PC-3 (cell line): ENCODE measurements at regions of chr3 and their contacts with region 1.

Region 1: DNA sequence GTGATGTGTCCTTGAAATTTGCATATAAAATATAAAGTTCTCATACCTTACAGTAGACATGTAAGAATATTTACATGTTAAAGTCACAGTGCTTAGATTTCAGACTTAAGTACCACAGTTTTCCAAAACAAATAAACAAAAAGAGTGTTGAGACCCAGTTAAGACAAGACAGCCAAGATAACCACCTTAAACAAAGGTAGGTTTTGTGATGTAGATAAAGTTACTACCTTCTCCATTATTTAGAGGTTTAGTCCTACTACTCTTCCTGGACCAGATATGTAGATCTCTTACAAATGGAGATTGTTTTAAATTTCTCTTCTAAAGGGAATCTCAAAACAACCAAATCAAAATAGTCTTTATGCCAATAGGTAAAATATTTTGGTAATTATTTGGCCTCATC is 15.7 kb downstream of the OR5H15 start:
- DNase-seq: no peak
- ATAC-seq: no peak
- H3K4me3 ChIP-seq: no peak overlapping the region
- H3K27ac ChIP-seq: no peak overlapping the region
- H3K4me1 ChIP-seq: no peaks in the 10 kb centered on the region
- H3K27me3 ChIP-seq: no peaks in the 10 kb centered on the region
- CTCF ChIP-seq: no peak

Region 2: DNA sequence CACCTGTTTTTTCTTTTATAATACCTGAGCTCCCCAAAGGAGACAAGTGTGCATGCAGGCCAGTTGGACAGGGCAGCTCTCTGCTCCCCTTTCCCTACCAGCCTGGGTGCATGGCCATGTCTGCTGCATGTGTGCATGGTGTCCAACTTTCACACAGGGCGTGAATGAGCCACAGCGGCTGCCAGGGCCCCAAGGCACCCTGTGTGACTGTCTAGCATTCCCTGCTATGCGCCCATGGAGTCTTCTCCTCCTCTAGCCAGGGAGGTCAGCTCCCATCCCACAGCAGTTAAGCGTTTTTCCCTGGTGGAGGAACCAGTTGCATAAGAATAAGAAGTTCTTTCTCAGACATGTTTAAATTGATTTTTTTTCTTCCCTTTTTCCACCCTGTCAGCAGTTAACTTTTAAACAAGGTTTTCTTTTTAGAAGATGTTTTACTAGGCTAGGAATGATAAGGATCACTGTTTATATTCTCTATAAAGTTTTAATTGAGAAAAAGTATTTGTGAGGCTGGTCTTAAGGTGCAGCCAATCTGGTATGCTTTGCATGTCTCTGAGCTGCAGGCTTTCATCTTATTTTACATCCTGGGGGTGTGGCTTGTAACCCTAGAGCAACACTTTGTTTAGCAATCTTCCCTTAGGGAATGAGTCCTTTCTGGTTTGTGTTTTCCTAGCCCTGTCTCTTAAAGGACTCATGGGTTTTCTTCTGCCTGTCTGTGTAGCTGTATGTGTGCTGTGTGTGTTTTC is 72.2 kb before region 1 on chr3:
- CTCF ChIA-PET with region 1: no interaction called
- POLR2A ChIA-PET with region 1: no interaction called
- intact Hi-C with region 1: no loop called
- DNase-seq: no peak
- ATAC-seq: no peak
- H3K4me3 ChIP-seq: no peak overlapping the region
- H3K27ac ChIP-seq: no peak overlapping the region
- H3K4me1 ChIP-seq: no peaks in the 10 kb centered on the region
- H3K27me3 ChIP-seq: no peaks in the 10 kb centered on the region
- CTCF ChIP-seq: no peak

Region 3: GRCh38 chr3:98140531-98140930 is 41.7 kb before region 1 on chr3:
- CTCF ChIA-PET with region 1: no interaction called
- POLR2A ChIA-PET with region 1: no interaction called
- intact Hi-C with region 1: loop called (anchors 2 kb)
- DNase-seq: no peak
- ATAC-seq: no peak
- H3K4me3 ChIP-seq: no peak overlapping the region
- H3K27ac ChIP-seq: no peak overlapping the region
- H3K4me1 ChIP-seq: no peaks in the 10 kb centered on the region
- H3K27me3 ChIP-seq: peaks cover 53% of the 10 kb centered on the region
- CTCF ChIP-seq: no peak

Region 4: DNA sequence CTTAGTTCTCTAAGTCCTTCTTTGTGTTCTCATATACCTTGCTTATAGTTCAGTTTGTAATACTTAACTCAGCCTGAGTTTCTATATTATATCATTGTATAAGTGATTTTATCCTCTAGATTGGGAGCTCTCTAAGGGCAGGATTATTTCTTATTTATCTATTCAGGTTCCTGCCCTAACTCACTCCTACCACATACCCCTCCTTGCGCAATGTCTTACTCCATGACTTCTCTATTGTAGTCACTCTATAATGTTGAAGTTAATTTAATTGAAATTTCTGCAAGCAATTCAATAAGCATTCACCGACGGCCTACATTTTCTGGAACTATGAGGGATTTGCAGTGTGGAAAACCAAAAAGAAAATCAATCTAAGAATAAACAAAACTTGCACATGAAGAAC is 167.9 kb after region 1 on chr3:
- CTCF ChIA-PET with region 1: no interaction called
- POLR2A ChIA-PET with region 1: no interaction called
- intact Hi-C with region 1: no loop called
- DNase-seq: no peak
- ATAC-seq: no peak
- H3K4me3 ChIP-seq: no peak overlapping the region
- H3K27ac ChIP-seq: no peak overlapping the region
- H3K4me1 ChIP-seq: no peaks in the 10 kb centered on the region
- H3K27me3 ChIP-seq: peaks cover 38% of the 10 kb centered on the region; the same call in 1 of the 2 replicates
- CTCF ChIP-seq: no peak